Upper lobe of right lung (tissue), 1 donor: ENCODE measurements at regions of chr16 and their contacts with region 1.

Region 1: GRCh38 chr16:46853713-46854443 is 22.9 kb upstream of the C16orf87 start:
- DNase-seq: peak; percentile 88
- ATAC-seq: peak; percentile 93
- H3K4me3 ChIP-seq: no peak overlapping the region
- H3K27ac ChIP-seq: no peak overlapping the region
- H3K4me1 ChIP-seq: no peaks in the 10 kb centered on the region
- H3K27me3 ChIP-seq: no peaks in the 10 kb centered on the region
- CTCF ChIP-seq: peak; percentile 82

Region 2: GRCh38 chr16:46908540-46909372 is 54.9 kb after region 1 on chr16:
- intact Hi-C with region 1: loop called (anchors 10 kb)
- DNase-seq: no peak
- ATAC-seq: peak; percentile 64
- H3K4me3 ChIP-seq: no peak overlapping the region
- H3K27ac ChIP-seq: no peak overlapping the region
- H3K4me1 ChIP-seq: no peaks in the 10 kb centered on the region
- H3K27me3 ChIP-seq: no peaks in the 10 kb centered on the region
- CTCF ChIP-seq: peak; percentile 76